CD4-positive, alpha-beta T cell (primary cell): ENCODE measurements at regions of chr3 and their contacts with region 1.

Region 1: GRCh38 chr3:40690749-40691451 is 166.1 kb downstream of the ZNF621 start:
- DNase-seq: no peak
- ATAC-seq: no peak
- H3K4me3 ChIP-seq: no peak overlapping the region
- H3K4me3 Mint-ChIP-seq: no peak overlapping the region
- H3K27ac ChIP-seq: no peak overlapping the region
- H3K27ac Mint-ChIP-seq: no peak overlapping the region
- H3K4me1 ChIP-seq: no peaks in the 10 kb centered on the region
- H3K4me1 Mint-ChIP-seq: no peaks in the 10 kb centered on the region
- H3K27me3 ChIP-seq: peaks cover 0 to 12% of the 10 kb centered on the region in 2 experiments
- H3K27me3 Mint-ChIP-seq: peaks cover 41% of the 10 kb centered on the region
- CTCF ChIP-seq: no peak

Region 2: GRCh38 chr3:41629072-41629471 is 938.2 kb after region 1 on chr3:
- CTCF ChIA-PET with region 1: no interaction called
- POLR2A ChIA-PET with region 1: no interaction called
- intact Hi-C with region 1: loop called in 1 of 2 experiments (anchors 10 kb)
- DNase-seq: no peak
- ATAC-seq: no peak
- H3K4me3 ChIP-seq: no peak overlapping the region
- H3K4me3 Mint-ChIP-seq: no peak overlapping the region
- H3K27ac ChIP-seq: no peak overlapping the region
- H3K27ac Mint-ChIP-seq: no peak overlapping the region
- H3K4me1 ChIP-seq: no peaks in the 10 kb centered on the region
- H3K4me1 Mint-ChIP-seq: no peaks in the 10 kb centered on the region
- H3K27me3 ChIP-seq: no peaks in the 10 kb centered on the region
- H3K27me3 Mint-ChIP-seq: no peaks in the 10 kb centered on the region
- CTCF ChIP-seq: no peak